ENCODE measurements at regions of chr2 and their contacts with region 1.

Region 1: GRCh38 chr2:72862239-72862988 is 24.8 kb upstream of the SPR start:
- DNase-seq: peak; percentile 93 to 97
- ATAC-seq: peak; percentile 97 to 99
- H3K4me3 ChIP-seq: peak overlapping the region; percentile 41
- H3K27ac ChIP-seq: peak overlapping the region; percentile 12 to 58; a peak in 2 of 6 replicates
- H3K4me1 ChIP-seq: peaks cover 10% of the 10 kb centered on the region; the same call in 2 of the 3 replicates
- CTCF ChIP-seq: peak; percentile 99
- EP300 ChIP-seq: no peak
- POLR2A ChIP-seq: no peak
- RAD21 ChIP-seq: peak; percentile 88

Region 2: DNA sequence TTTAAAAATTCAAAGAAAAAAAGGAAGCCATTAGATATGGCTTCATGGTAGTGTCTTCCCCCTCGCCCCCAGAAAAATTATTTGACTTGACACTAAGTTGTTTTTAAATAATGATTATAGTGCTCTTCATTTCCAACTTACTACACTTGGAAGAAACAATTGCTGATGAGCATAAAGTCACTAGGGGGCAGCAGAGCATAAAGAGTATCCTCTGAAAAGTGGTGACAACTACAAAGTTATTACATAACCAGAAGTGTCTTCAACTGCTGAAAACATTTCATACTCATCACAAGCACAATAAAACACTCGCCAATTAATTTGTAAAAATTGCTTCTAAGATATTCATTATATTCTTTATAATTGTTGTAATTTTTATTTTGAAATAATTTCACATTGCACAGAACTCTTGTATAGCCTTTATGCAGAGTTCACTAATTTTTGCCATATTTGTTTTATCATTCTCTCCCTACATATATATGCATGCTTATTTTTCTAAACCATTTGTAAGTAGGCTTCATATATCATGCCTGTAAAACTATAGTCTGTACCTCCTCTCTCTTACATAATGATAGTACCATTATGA is 91.4 kb before region 1 on chr2:
- CTCF ChIA-PET with region 1: interaction called, 228 read pairs
- POLR2A ChIA-PET with region 1: interaction called, 3 read pairs
- DNase-seq: peak; percentile 73 to 82
- ATAC-seq: peak; percentile 73 to 80
- H3K4me3 ChIP-seq: no peak overlapping the region
- H3K27ac ChIP-seq: no peak overlapping the region
- H3K4me1 ChIP-seq: 0 out of 3 replicates have a peak, but pooled peaks cover 4% of the 10 kb centered on the region
- CTCF ChIP-seq: peak; percentile 99
- EP300 ChIP-seq: no peak
- POLR2A ChIP-seq: no peak
- RAD21 ChIP-seq: peak; percentile 97 to 99

Region 3: DNA sequence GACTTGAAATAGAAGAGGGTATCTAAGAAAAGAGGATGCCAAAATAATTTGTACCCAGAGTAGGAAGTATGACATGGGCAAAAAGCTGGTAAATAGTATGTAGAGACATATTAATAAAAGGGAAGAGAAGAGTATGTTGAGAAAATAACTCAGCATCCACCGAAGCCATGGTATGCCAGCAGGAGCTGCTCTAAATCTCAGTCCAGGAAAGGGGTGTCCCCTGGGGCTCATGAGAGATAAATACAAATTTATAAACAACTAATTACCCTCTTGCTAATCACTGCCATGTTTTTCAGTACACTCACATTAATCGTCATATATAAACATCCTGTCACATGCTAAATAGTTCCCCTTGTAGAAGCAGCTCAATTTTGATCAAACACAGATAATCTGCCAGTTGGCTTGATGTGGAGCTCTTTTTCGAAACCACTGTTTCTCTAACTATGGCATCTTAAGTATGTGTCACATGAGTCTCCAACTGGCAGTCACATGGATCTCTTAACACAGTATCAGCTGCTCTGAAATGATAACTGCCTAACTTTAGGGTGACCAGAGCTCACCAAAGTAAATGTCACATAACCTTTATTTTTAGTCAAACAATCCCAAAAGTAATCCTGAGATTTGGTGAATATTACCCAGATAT is 68.5 kb before region 1 on chr2:
- CTCF ChIA-PET with region 1: interaction called, 76 read pairs
- POLR2A ChIA-PET with region 1: no interaction called
- DNase-seq: peak in 1 of 2 experiments; percentile 16
- ATAC-seq: no peak; a peak in 1 of 6 replicates
- H3K4me3 ChIP-seq: no peak overlapping the region
- H3K27ac ChIP-seq: no peak overlapping the region
- H3K4me1 ChIP-seq: peaks cover 19% of the 10 kb centered on the region
- CTCF ChIP-seq: no peak
- EP300 ChIP-seq: no peak
- POLR2A ChIP-seq: no peak
- RAD21 ChIP-seq: no peak

Region 4: DNA sequence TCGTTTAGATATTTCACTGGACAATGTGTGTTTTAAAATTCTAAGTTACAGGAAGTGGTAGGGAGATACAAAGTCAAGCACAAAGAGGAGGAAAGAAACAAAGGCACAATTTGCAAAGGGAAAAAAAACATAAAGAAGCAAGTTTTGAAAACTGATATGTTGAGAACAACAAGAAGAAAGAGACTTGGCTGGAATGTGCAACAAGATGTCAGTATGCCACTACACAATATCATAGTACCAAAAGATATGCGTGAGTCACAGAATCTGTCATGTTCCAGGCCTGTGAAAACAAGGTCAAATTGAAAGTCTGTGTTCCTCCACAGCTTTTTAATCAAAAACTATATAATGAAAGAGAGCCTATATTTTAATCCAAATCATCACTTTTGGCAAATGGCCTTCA is 48.6 kb before region 1 on chr2:
- CTCF ChIA-PET with region 1: interaction called, 30 read pairs
- POLR2A ChIA-PET with region 1: no interaction called
- DNase-seq: no peak
- ATAC-seq: no peak
- H3K4me3 ChIP-seq: no peak overlapping the region
- H3K27ac ChIP-seq: no peak overlapping the region
- H3K4me1 ChIP-seq: peaks cover 44% of the 10 kb centered on the region
- CTCF ChIP-seq: no peak
- EP300 ChIP-seq: no peak
- POLR2A ChIP-seq: no peak
- RAD21 ChIP-seq: no peak

Region 5: DNA sequence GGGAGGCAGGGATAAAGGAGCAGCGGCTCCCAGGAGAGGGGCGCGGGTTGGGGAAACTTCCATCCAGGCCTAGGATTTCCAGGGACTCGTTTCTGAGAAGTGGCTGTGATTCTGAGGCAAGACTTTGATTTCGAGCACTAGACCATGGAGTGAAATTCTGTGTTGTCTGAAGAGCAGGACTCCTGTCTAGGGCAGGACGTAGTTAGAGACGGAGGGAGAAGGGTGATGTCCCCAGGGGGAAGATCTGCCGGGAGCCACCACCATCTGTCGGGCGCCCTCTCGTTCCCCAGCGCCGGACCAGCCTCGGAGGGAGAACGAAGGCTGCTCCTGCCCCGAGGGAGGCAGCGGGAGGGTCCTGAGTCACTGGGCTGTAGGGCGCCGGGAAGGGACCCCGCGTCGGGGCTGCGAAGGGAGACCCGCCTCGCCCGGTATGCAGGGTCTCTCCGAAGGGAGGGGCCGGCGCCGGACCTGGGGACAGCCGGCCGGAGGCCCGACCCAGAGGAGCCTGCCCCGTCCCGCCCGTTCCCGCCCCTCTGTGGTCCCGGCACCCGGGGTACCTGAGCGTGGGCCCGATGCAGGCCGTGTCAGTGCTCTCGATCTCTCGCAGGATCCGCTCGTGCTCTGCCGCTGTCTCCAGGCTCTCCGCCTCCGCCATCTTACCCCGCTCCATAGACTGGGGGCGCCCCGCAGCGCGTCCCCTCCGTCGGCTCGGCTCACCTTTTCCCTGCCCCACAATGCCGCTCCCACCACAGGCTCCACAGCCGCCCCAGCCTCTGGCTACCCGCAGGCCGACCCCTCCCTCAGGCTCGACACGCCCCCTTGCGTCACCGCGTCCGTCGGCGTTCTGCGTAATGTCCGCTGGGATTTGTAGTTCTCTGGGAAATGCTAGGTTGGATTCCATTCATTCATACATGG is 36.9 kb before region 1 on chr2 and contains the start of gene EXOC6B:
- CTCF ChIA-PET with region 1: interaction called, 21 read pairs
- POLR2A ChIA-PET with region 1: no interaction called
- DNase-seq: peak; percentile 84 to 93
- ATAC-seq: peak; percentile 90 to 97
- H3K4me3 ChIP-seq: peak within 1 kb of the TSS; percentile 66
- H3K27ac ChIP-seq: peak within 1 kb of the TSS; percentile 77 to 93
- H3K4me1 ChIP-seq: peaks cover 25% of the 10 kb centered on the region
- CTCF ChIP-seq: no peak
- EP300 ChIP-seq: no peak
- POLR2A ChIP-seq: peak; percentile 94
- RAD21 ChIP-seq: no peak; a peak in 1 of 5 replicates
- polyA plus RNA-seq, gene EXOC6B: 24.7 and 28.3 TPM in 2 replicates

Region 6: GRCh38 chr2:72841462-72842125 is 20.8 kb before region 1 on chr2:
- CTCF ChIA-PET with region 1: interaction called, 78 read pairs
- POLR2A ChIA-PET with region 1: no interaction called
- DNase-seq: no peak
- ATAC-seq: no peak
- H3K4me3 ChIP-seq: no peak overlapping the region
- H3K27ac ChIP-seq: no peak overlapping the region
- H3K4me1 ChIP-seq: no peaks in the 10 kb centered on the region
- CTCF ChIP-seq: no peak
- EP300 ChIP-seq: no peak
- POLR2A ChIP-seq: no peak
- RAD21 ChIP-seq: no peak

Measured in A549 (cell line).